ENCODE measurements at regions of chrX and their contacts with region 1.

Region 1: DNA sequence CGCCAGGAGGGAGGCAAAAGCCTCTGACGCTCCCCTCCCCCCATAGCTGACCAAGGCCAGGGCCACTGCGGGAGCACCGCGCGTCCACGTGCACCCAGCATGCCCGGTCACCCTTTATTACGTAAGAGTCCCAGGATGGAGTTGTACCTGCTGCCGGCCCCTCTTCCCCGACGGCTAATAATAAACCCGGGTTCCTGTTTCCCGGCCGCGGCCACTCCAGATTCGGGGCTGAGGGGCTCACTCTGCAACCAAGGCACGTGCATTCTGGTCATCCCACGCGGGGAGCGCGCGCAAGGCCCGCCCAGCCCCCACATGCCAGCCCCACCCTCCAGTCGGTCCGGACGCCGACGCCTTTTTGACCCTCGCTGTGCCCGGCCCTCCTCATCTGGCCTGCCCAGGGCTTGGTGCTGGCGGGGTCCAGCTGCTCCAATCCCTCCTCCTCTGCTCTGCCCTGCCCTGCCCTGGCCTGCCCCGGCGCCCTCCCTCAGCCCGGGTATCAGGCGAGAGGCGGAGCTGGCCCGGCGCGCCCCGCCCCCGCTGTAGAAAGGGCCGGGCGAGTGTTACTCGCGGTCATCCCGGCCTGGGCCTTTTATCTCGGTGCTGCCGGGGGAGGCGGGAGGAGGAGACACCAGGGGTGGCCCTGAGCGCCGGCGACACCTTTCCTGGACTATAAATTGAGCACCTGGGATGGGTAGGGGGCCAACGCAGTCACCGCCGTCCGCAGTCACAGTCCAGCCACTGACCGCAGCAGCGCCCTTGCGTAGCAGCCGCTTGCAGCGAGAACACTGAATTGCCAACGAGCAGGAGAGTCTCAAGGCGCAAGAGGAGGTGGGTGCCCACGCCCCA is 2.5 kb downstream of the MID1IP1 start:
- DNase-seq: peak; percentile 63 to 86 (median 83)
- H3K4me3 ChIP-seq: peak overlapping the region; percentile 60 to 91 (median 88)
- H3K4me3 Mint-ChIP-seq: peak overlapping the region; percentile 88 to 93
- H3K27ac ChIP-seq: peak overlapping the region; percentile 79 to 89
- H3K27ac Mint-ChIP-seq: peak overlapping the region; percentile 88 to 98 (median 96)
- H3K4me1 ChIP-seq: peaks cover 37 to 41% of the 10 kb centered on the region in 2 donors
- H3K4me1 Mint-ChIP-seq: peaks cover 35% of the 10 kb centered on the region
- H3K27me3 ChIP-seq: no peaks in the 10 kb centered on the region
- H3K27me3 Mint-ChIP-seq: peaks cover 0 to 17% (median 0%) of the 10 kb centered on the region in 3 donors
- CTCF ChIP-seq: no peak

Region 2: DNA sequence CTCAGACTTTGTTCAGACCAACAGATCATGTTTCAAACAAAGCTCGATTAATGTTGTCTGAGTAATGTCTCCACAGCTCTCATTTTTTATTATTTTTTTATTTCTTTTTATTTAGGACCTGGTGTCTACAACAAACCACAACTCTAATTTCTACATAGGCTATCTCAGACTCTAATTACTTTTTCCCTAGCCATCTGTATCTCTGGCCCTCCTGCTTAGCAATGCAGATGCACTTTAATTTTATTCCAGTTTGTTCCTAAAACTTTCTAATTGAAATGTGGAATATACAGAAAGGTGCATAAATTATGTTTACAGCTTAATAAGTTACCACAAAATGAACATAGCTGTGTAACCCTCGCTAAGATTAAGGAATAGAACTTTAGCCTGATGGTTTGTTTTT is 121.7 kb before region 1 on chrX:
- intact Hi-C with region 1: no loop called
- DNase-seq: no peak
- H3K4me3 ChIP-seq: no peak overlapping the region
- H3K4me3 Mint-ChIP-seq: no peak overlapping the region
- H3K27ac ChIP-seq: no peak overlapping the region
- H3K27ac Mint-ChIP-seq: no peak overlapping the region
- H3K4me1 ChIP-seq: no peaks in the 10 kb centered on the region
- H3K4me1 Mint-ChIP-seq: peaks cover 10% of the 10 kb centered on the region
- H3K27me3 ChIP-seq: peaks cover 0 to under 1% of the 10 kb centered on the region in 2 donors
- H3K27me3 Mint-ChIP-seq: peaks cover 0 to 7% (median 0%) of the 10 kb centered on the region in 3 donors
- CTCF ChIP-seq: no peak

Region 3: GRCh38 chrX:38831949-38832348 is 28.1 kb after region 1 on chrX:
- intact Hi-C with region 1: no loop called
- DNase-seq: no peak
- H3K4me3 ChIP-seq: no peak overlapping the region
- H3K4me3 Mint-ChIP-seq: no peak overlapping the region
- H3K27ac ChIP-seq: no peak overlapping the region
- H3K27ac Mint-ChIP-seq: no peak overlapping the region
- H3K4me1 ChIP-seq: no peaks in the 10 kb centered on the region
- H3K4me1 Mint-ChIP-seq: peaks cover 2% of the 10 kb centered on the region
- H3K27me3 ChIP-seq: no peaks in the 10 kb centered on the region
- H3K27me3 Mint-ChIP-seq: no peaks in the 10 kb centered on the region
- CTCF ChIP-seq: no peak

Region 4: GRCh38 chrX:38845426-38845825 is 41.6 kb after region 1 on chrX:
- intact Hi-C with region 1: loop called in 1 of 2 experiments (anchors 5 kb)
- DNase-seq: no peak
- H3K4me3 ChIP-seq: no peak overlapping the region
- H3K4me3 Mint-ChIP-seq: no peak overlapping the region
- H3K27ac ChIP-seq: no peak overlapping the region
- H3K27ac Mint-ChIP-seq: no peak overlapping the region
- H3K4me1 ChIP-seq: peaks cover 8 to 12% of the 10 kb centered on the region in 2 donors
- H3K4me1 Mint-ChIP-seq: peaks cover 9% of the 10 kb centered on the region
- H3K27me3 ChIP-seq: peaks cover 0 to 2% of the 10 kb centered on the region in 2 donors
- H3K27me3 Mint-ChIP-seq: no peaks in the 10 kb centered on the region
- CTCF ChIP-seq: no peak

Region 5: DNA sequence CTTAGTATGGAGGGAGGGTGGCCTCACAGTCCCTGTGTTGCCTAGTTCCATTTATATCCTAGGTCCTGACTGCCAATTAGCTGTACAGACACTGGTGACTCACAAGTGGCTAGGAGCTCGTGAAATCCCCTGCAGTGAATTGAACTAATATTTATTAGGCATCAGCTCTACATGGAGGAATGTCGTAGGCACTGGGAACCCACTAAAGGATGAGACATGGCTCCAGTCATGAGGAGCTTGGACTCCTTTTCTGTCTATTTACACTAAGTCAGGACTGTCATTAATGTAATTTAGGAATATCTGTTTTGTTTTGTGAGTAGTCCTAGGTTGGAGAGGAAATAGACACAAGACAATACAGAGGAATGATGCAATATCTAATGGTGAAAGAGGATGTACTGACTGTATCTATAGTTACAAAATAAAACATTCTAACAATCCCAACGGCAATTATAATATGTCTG is 65.2 kb after region 1 on chrX:
- intact Hi-C with region 1: loop called (anchors 5 to 10 kb)
- DNase-seq: peak; percentile 78 to 86 (median 83)
- H3K4me3 ChIP-seq: no peak overlapping the region
- H3K4me3 Mint-ChIP-seq: no peak overlapping the region
- H3K27ac ChIP-seq: peak overlapping the region; percentile 81 to 95
- H3K27ac Mint-ChIP-seq: peak overlapping the region; percentile 93 to 99 (median 95)
- H3K4me1 ChIP-seq: peaks cover 44 to 45% of the 10 kb centered on the region in 2 donors
- H3K4me1 Mint-ChIP-seq: peaks cover 46% of the 10 kb centered on the region
- H3K27me3 ChIP-seq: no peaks in the 10 kb centered on the region
- H3K27me3 Mint-ChIP-seq: peaks cover 0 to 1% (median 0%) of the 10 kb centered on the region in 3 donors
- CTCF ChIP-seq: no peak

Region 6: GRCh38 chrX:38985375-38985774 is 181.6 kb after region 1 on chrX:
- intact Hi-C with region 1: loop called in 1 of 2 experiments (anchors 10 kb)
- DNase-seq: peak in 2 of 3 donors; percentile 7 to 21
- H3K4me3 ChIP-seq: no peak overlapping the region
- H3K4me3 Mint-ChIP-seq: no peak overlapping the region
- H3K27ac ChIP-seq: no peak overlapping the region
- H3K27ac Mint-ChIP-seq: peak overlapping the region in 1 of 7 donors; percentile 47
- H3K4me1 ChIP-seq: peaks cover 22 to 27% of the 10 kb centered on the region in 2 donors
- H3K4me1 Mint-ChIP-seq: peaks cover 24% of the 10 kb centered on the region
- H3K27me3 ChIP-seq: peaks cover 0 to 2% of the 10 kb centered on the region in 2 donors
- H3K27me3 Mint-ChIP-seq: peaks cover 0 to 2% (median 1%) of the 10 kb centered on the region in 3 donors
- CTCF ChIP-seq: peak; percentile 42